CD8-positive, alpha-beta T cell (primary cell): ENCODE measurements at regions of chr19 and their contacts with region 1.

Region 1: GRCh38 chr19:39412100-39412866 is at the start of gene PLEKHG2:
- DNase-seq: peak; percentile 95 to 99 (median 97)
- ATAC-seq: peak; percentile 57
- H3K4me3 ChIP-seq: peak within 1 kb of the TSS; percentile 95
- H3K4me3 Mint-ChIP-seq: peak within 1 kb of the TSS; percentile 89
- H3K27ac ChIP-seq: peak within 1 kb of the TSS; percentile 94 to 100
- H3K27ac Mint-ChIP-seq: peak within 1 kb of the TSS; percentile 96
- H3K4me1 ChIP-seq: peaks cover 26% of the 10 kb centered on the region
- H3K4me1 Mint-ChIP-seq: peaks cover 33% of the 10 kb centered on the region
- H3K27me3 ChIP-seq: no peaks in the 10 kb centered on the region
- H3K27me3 Mint-ChIP-seq: no peaks in the 10 kb centered on the region
- CTCF ChIP-seq: peak; percentile 84
- total RNA-seq, gene PLEKHG2: 54.8 to 69.0 TPM

Region 2: DNA sequence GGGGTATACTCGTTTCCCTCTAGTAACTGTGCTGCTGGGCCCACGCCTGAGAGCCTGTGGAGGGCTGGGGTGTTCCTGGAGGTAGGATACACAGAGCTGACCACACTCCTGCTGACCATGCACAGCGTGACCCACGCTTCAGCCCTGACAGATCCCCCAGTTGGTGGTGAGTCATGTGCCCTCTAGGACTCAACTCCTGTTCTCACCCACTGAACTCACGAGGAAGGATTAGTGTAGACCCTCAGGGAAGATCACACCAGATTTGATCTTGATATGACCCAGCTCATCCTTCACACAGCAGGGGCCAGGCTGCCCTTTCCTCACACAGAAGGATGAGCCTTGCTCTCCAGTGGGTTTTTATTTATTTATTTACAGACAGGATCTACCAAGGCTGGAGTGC is 341.4 kb before region 1 on chr19:
- CTCF ChIA-PET with region 1: no interaction called
- POLR2A ChIA-PET with region 1: no interaction called
- intact Hi-C with region 1: loop called in 1 of 2 experiments (anchors 5 kb)
- DNase-seq: no peak
- ATAC-seq: no peak
- H3K4me3 ChIP-seq: no peak overlapping the region
- H3K4me3 Mint-ChIP-seq: no peak overlapping the region
- H3K27ac ChIP-seq: no peak overlapping the region
- H3K27ac Mint-ChIP-seq: peak overlapping the region; percentile 60
- H3K4me1 ChIP-seq: peaks cover 20% of the 10 kb centered on the region
- H3K4me1 Mint-ChIP-seq: peaks cover 23% of the 10 kb centered on the region
- H3K27me3 ChIP-seq: no peaks in the 10 kb centered on the region
- H3K27me3 Mint-ChIP-seq: peaks cover 3% of the 10 kb centered on the region
- CTCF ChIP-seq: no peak

Region 3: GRCh38 chr19:39212375-39212742 is 199.9 kb before region 1 on chr19:
- CTCF ChIA-PET with region 1: interaction called, 5 read pairs
- POLR2A ChIA-PET with region 1: no interaction called
- intact Hi-C with region 1: loop called in 1 of 2 experiments (anchors 5 kb)
- DNase-seq: peak; percentile 28 to 78 (median 63)
- ATAC-seq: peak; percentile 73
- H3K4me3 ChIP-seq: no peak overlapping the region
- H3K4me3 Mint-ChIP-seq: no peak overlapping the region
- H3K27ac ChIP-seq: no peak overlapping the region
- H3K27ac Mint-ChIP-seq: no peak overlapping the region
- H3K4me1 ChIP-seq: no peaks in the 10 kb centered on the region
- H3K4me1 Mint-ChIP-seq: no peaks in the 10 kb centered on the region
- H3K27me3 ChIP-seq: no peaks in the 10 kb centered on the region
- H3K27me3 Mint-ChIP-seq: peaks cover 10% of the 10 kb centered on the region
- CTCF ChIP-seq: peak; percentile 47

Region 4: GRCh38 chr19:39341719-39342604 is 70.3 kb before region 1 on chr19 and contains the start of gene SAMD4B:
- CTCF ChIA-PET with region 1: interaction called, 4 read pairs
- POLR2A ChIA-PET with region 1: interaction called, 9 read pairs
- intact Hi-C with region 1: loop called (anchors 1 kb)
- DNase-seq: peak; percentile 98 to 100 (median 99)
- ATAC-seq: peak; percentile 90
- H3K4me3 ChIP-seq: peak within 1 kb of the TSS; percentile 93 to 97
- H3K4me3 Mint-ChIP-seq: peak within 1 kb of the TSS; percentile 100
- H3K27ac ChIP-seq: peak within 1 kb of the TSS; percentile 67 to 88
- H3K27ac Mint-ChIP-seq: peak within 1 kb of the TSS; percentile 98
- H3K4me1 ChIP-seq: peaks cover 29% of the 10 kb centered on the region
- H3K4me1 Mint-ChIP-seq: peaks cover 69% of the 10 kb centered on the region
- H3K27me3 ChIP-seq: no peaks in the 10 kb centered on the region
- H3K27me3 Mint-ChIP-seq: no peaks in the 10 kb centered on the region
- CTCF ChIP-seq: peak; percentile 73
- total RNA-seq, gene SAMD4B: 68.3 to 78.1 TPM

Region 5: DNA sequence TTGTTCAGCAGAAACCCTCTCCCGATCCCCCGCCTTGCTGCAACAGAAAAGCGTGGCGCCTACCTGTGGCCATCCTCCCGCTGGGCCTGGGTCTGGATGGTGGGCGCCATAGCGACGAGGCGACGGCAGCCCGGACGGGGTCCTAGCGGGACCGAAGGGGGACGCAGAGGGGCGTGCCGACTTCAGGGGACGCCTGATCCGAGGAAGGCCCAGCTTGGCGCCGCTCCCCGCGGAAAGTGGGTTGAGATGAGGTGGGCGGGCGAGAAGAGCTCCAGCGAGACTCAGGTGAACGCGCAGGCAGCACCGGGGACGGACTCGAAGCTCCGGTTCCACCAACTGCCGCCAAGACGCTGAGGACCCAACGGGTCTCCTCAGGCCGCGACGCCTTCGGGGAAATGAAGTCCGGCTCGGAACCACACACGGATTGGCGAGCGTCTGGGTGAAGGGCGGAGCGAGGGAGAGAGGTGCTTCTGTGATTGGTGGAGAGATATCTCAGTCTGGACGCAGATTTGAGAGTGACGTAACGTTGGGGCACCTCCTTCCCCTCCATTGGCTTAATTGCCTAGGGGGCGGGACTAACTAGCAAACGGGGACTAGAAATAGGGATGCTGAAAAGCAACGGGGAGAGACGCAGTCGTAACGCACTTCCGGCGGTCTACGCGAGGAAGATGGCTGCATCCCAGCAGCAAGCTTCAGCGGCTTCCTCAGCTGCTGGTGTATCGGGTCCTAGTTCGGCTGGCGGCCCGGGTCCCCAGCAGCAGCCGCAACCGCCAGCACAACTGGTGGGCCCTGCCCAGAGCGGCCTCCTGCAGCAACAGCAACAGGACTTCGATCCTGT is 21.3 kb before region 1 on chr19 and contains the starts of genes MED29 and PAF1:
- CTCF ChIA-PET with region 1: interaction called, 156 read pairs
- POLR2A ChIA-PET with region 1: interaction called, 66 read pairs
- intact Hi-C with region 1: loop called (anchors 1 kb)
- DNase-seq: peak; percentile 89 to 100 (median 94)
- ATAC-seq: peak; percentile 87
- H3K4me3 ChIP-seq: peak within 1 kb of the TSS; percentile 86 to 95
- H3K4me3 Mint-ChIP-seq: peak within 1 kb of the TSS; percentile 96
- H3K27ac ChIP-seq: peak within 1 kb of the TSS; percentile 99
- H3K27ac Mint-ChIP-seq: peak within 1 kb of the TSS; percentile 100
- H3K4me1 ChIP-seq: peaks cover 19% of the 10 kb centered on the region
- H3K4me1 Mint-ChIP-seq: peaks cover 37% of the 10 kb centered on the region
- H3K27me3 ChIP-seq: no peaks in the 10 kb centered on the region
- H3K27me3 Mint-ChIP-seq: no peaks in the 10 kb centered on the region
- CTCF ChIP-seq: no peak
- total RNA-seq, gene MED29: 45.9 to 55.1 TPM
- total RNA-seq, gene PAF1: 109 to 117 TPM

Region 6: GRCh38 chr19:39397360-39398296 is 14.7 kb before region 1 on chr19:
- CTCF ChIA-PET with region 1: interaction called, 156 read pairs
- POLR2A ChIA-PET with region 1: interaction called, 66 read pairs
- intact Hi-C with region 1: loop called (anchors 1 kb)
- DNase-seq: peak; percentile 88 to 98 (median 94)
- ATAC-seq: peak; percentile 41
- H3K4me3 ChIP-seq: peak overlapping the region; percentile 12 to 18
- H3K4me3 Mint-ChIP-seq: peak overlapping the region; percentile 71
- H3K27ac ChIP-seq: peak overlapping the region; percentile 33 to 92
- H3K27ac Mint-ChIP-seq: peak overlapping the region; percentile 96
- H3K4me1 ChIP-seq: peaks cover 51% of the 10 kb centered on the region
- H3K4me1 Mint-ChIP-seq: peaks cover 56% of the 10 kb centered on the region
- H3K27me3 ChIP-seq: no peaks in the 10 kb centered on the region
- H3K27me3 Mint-ChIP-seq: no peaks in the 10 kb centered on the region
- CTCF ChIP-seq: peak; percentile 94

Region 7: DNA sequence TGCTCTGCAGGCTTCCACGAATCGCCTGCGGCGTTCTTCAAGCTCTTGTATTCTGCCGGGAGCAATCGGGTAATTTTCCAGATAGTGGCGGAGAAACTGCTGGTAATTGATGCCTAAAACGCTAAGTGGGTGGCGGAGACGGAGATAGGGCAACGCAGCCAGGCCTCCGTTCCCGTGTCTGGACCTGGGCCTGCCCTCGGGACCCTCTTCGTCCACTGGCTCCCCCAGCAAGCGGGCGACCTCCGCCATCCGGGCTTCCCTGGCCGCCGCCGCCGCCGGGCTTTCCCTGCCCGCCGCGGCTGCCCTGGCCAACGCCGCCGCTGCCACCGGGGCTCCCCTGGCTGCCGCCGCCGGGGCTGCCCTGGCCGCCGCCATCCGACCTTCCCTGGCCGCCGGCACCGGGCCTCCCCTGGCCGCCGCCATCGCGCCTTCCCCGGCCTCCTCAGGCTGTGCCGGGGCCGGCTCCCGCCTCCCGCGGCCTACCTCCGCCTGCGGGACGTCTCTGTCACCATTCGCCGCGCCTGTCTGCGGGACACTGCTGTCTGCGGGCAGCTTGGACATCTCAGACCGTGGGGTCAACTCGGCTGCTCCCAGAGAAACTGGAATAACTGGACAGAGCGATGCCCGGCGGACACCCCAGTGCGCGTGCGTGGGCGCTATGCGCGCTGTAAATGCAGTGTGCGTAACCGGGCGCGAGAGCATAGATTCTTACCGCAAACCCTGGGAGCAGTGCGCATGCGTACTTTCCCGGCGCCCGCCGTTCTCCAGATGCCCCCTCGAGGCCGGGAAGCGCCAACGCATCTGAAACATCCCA is 127.4 kb after region 1 on chr19 and contains the start of gene EID2:
- CTCF ChIA-PET with region 1: no interaction called
- POLR2A ChIA-PET with region 1: no interaction called
- intact Hi-C with region 1: loop called in 1 of 2 experiments (anchors 1 kb)
- DNase-seq: peak; percentile 84 to 97 (median 95)
- ATAC-seq: peak; percentile 91
- H3K4me3 ChIP-seq: peak within 1 kb of the TSS; percentile 81 to 95
- H3K4me3 Mint-ChIP-seq: peak within 1 kb of the TSS; percentile 97
- H3K27ac ChIP-seq: peak within 1 kb of the TSS; percentile 90 to 93
- H3K27ac Mint-ChIP-seq: peak within 1 kb of the TSS; percentile 98
- H3K4me1 ChIP-seq: peaks cover 31% of the 10 kb centered on the region
- H3K4me1 Mint-ChIP-seq: peaks cover 58% of the 10 kb centered on the region
- H3K27me3 ChIP-seq: no peaks in the 10 kb centered on the region
- H3K27me3 Mint-ChIP-seq: no peaks in the 10 kb centered on the region
- CTCF ChIP-seq: peak; percentile 74
- total RNA-seq, gene EID2: 16.3 to 17.7 TPM